ENCODE measurements at regions of chr17 and their contacts with region 1.

Region 1: DNA sequence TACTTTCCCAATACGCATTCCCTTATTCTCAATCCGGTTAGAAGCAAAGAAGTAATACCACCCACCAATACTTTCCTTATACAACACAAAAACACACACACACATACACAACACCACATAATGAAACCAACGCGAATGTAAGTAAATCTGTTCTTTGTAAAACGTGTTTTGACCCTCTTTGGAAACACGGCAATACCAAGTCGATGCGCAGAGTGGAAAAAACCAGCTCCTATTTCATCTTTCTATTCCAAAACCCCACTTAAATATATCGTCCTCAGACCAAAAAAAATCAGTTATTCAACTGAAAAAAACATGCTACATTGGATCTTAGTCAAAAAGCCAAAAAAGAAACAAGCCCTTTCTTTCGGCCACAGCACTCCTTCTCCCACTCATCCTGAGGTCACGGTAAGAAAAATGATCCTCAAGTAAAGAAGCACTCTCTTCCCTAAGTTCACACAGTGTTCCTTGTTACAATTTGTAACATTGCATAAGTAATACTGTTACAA is 31.0 kb upstream of the ARL4D start:
- DNase-seq: peak in 3 of 35 experiments; percentile 6 to 78 (median 36)
- ATAC-seq: peak; percentile 35 to 53 (median 44)
- H3K4me3 ChIP-seq: peak overlapping the region; percentile 84 to 86
- H3K4me3 Mint-ChIP-seq: peak overlapping the region; percentile 78 to 97 (median 90)
- H3K27ac ChIP-seq: peak overlapping the region; percentile 96
- H3K27ac Mint-ChIP-seq: peak overlapping the region; percentile 100
- H3K4me1 ChIP-seq: peaks cover 12 to 33% of the 10 kb centered on the region in 2 experiments
- H3K4me1 Mint-ChIP-seq: peaks cover 38 to 58% (median 52%) of the 10 kb centered on the region in 3 donors
- H3K27me3 ChIP-seq: no peaks in the 10 kb centered on the region
- H3K27me3 Mint-ChIP-seq: no peaks in the 10 kb centered on the region

Region 2: DNA sequence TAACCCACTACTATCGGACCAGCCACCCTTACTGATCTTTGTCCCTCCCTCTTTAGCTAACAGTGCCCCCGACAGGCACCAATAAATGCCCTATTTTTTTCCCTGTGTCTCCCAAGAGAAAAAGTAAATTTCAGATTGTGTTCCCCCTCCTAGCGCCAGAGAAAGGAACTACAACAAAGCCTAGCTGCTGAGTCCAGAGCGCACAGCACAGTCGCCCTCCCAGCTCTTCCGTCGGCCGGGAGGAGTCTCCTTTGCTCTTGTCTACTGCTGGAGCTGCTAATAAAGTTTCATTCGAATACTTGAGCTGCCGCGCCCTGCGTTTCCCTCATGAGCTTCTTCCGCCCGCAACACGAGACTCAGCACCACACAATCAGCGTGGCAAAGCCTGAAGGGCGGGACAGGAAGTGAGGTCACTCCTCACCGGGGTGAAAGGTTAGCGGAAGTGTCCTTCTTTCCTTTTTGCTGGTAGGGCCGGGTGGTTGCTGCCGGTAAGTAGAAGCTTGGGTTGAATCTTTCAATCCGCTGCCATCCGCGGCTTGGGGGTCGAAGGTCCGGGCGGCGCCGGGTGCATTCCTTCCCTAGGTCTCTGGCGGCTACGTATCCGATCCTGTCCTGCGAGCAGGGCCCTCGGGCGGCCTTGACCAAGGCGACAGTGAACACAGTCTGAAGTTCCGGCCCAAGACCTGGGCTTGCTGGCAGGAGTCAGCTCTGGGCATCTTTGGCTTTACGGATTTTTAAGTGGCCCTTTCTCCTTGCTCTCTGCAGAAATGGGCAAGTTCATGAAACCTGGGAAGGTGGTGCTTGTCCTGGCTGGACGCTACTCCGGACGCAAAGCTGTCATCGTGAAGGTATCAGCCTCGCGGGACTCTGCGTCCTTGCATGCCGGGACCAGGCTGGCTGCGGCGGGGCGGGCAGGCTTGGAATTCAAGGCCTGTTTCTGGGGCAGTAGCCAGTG is 369.5 kb before region 1 on chr17 and contains the start of gene RPL27:
- CTCF ChIA-PET with region 1: no interaction called
- POLR2A ChIA-PET with region 1: interaction called in 1 of 2 experiments, 14 read pairs
- DNase-seq: peak; percentile 94 to 100 (median 98)
- ATAC-seq: peak; percentile 94 to 97 (median 95)
- H3K4me3 ChIP-seq: peak within 1 kb of the TSS; percentile 72 to 80
- H3K4me3 Mint-ChIP-seq: peak within 1 kb of the TSS; percentile 90 to 97 (median 92)
- H3K27ac ChIP-seq: peak within 1 kb of the TSS; percentile 94
- H3K27ac Mint-ChIP-seq: peak within 1 kb of the TSS; percentile 88 to 98
- H3K4me1 ChIP-seq: peaks cover 3 to 27% of the 10 kb centered on the region in 2 experiments
- H3K4me1 Mint-ChIP-seq: peaks cover 24 to 30% (median 26%) of the 10 kb centered on the region in 3 donors
- H3K27me3 ChIP-seq: no peaks in the 10 kb centered on the region
- H3K27me3 Mint-ChIP-seq: no peaks in the 10 kb centered on the region
- total RNA-seq, gene RPL27: 1,254 to 1,790 (median 1,710) TPM

Region 3: GRCh38 chr17:43224146-43224695 is 143.6 kb before region 1 on chr17:
- CTCF ChIA-PET with region 1: no interaction called
- POLR2A ChIA-PET with region 1: no interaction called
- DNase-seq: peak in 1 of 35 experiments; percentile 0
- ATAC-seq: no peak
- H3K4me3 ChIP-seq: no peak overlapping the region
- H3K4me3 Mint-ChIP-seq: no peak overlapping the region
- H3K27ac ChIP-seq: no peak overlapping the region
- H3K27ac Mint-ChIP-seq: no peak overlapping the region
- H3K4me1 ChIP-seq: peaks cover 0 to 4% of the 10 kb centered on the region in 2 experiments
- H3K4me1 Mint-ChIP-seq: peaks cover 0 to 3% (median 0%) of the 10 kb centered on the region in 3 donors
- H3K27me3 ChIP-seq: no peaks in the 10 kb centered on the region
- H3K27me3 Mint-ChIP-seq: no peaks in the 10 kb centered on the region

Region 4: DNA sequence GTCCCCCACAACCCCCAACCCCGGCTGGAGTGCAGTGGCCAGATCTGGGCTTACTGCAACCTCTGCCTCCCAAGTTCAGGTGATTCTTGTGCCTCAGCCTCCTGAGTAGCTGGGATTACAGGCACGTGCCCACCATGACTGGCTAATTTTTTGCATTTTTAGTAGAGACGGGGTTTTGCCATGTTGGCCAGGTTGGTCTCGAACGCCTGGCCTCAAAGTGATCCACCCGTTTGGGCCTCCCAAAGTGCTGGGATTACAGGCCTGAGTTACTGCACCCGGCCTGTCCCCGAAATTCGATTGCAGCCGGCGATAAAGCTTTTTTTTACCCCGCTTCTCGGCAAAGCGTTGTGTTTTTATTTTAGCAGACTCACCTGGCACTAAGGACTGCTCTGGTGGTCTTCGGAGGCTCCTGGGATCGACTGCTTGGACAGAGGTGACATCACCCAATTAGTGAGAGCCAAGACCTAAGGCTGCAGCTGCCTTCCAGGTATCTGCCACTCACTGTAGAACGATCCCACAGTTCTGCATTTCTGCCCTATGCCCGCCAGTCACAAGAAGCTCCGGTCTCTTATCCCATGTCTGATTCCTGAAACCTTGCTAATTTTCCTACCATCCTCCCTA is 51.2 kb before region 1 on chr17:
- CTCF ChIA-PET with region 1: interaction called in 1 of 2 experiments, 4 read pairs
- POLR2A ChIA-PET with region 1: interaction called, 6 to 28 read pairs
- DNase-seq: peak in 4 of 35 experiments; percentile 6 to 34 (median 18)
- ATAC-seq: no peak
- H3K4me3 ChIP-seq: no peak overlapping the region
- H3K4me3 Mint-ChIP-seq: no peak overlapping the region
- H3K27ac ChIP-seq: no peak overlapping the region
- H3K27ac Mint-ChIP-seq: peak overlapping the region in 1 of 2 donors; percentile 64
- H3K4me1 ChIP-seq: peaks cover 0 to 2% of the 10 kb centered on the region in 2 experiments
- H3K4me1 Mint-ChIP-seq: peaks cover 6 to 14% (median 10%) of the 10 kb centered on the region in 3 donors
- H3K27me3 ChIP-seq: no peaks in the 10 kb centered on the region
- H3K27me3 Mint-ChIP-seq: no peaks in the 10 kb centered on the region

Region 5: DNA sequence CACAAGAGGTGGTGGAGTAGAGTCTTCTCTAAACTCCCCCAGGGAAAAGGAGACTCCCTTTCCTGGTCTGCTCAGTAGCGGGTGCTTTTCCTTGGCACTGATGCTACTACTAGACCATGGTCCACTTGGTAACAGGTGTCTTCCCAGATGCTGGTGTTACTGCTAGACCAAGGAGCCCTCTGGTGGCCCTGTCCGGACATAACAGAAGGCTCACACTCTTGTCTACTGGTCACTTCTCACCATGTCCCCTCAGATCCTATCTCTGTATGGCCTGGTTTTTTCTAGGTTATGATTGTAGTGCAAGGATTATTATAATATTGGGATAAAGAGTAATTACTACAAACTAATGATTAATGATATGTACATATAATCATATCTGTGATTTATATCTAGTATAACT is 18.6 kb before region 1 on chr17:
- CTCF ChIA-PET with region 1: no interaction called
- POLR2A ChIA-PET with region 1: no interaction called
- DNase-seq: no peak
- ATAC-seq: no peak
- H3K4me3 ChIP-seq: peak overlapping the region in 1 of 2 donors; percentile 10
- H3K4me3 Mint-ChIP-seq: no peak overlapping the region
- H3K27ac ChIP-seq: no peak overlapping the region
- H3K27ac Mint-ChIP-seq: no peak overlapping the region
- H3K4me1 ChIP-seq: no peaks in the 10 kb centered on the region
- H3K4me1 Mint-ChIP-seq: peaks cover 0 to 8% (median 5%) of the 10 kb centered on the region in 3 donors
- H3K27me3 ChIP-seq: no peaks in the 10 kb centered on the region
- H3K27me3 Mint-ChIP-seq: no peaks in the 10 kb centered on the region

Region 6: GRCh38 chr17:43388359-43389045 is 20.7 kb after region 1 on chr17:
- CTCF ChIA-PET with region 1: interaction called in 1 of 2 experiments, 14 read pairs
- POLR2A ChIA-PET with region 1: interaction called, 9 to 80 read pairs
- DNase-seq: peak; percentile 85 to 94 (median 89)
- ATAC-seq: peak; percentile 73 to 80 (median 78)
- H3K4me3 ChIP-seq: peak overlapping the region; percentile 89 to 92
- H3K4me3 Mint-ChIP-seq: peak overlapping the region; percentile 90 to 94 (median 93)
- H3K27ac ChIP-seq: peak overlapping the region; percentile 99
- H3K27ac Mint-ChIP-seq: peak overlapping the region; percentile 96 to 97
- H3K4me1 ChIP-seq: peaks cover 6 to 26% of the 10 kb centered on the region in 2 experiments
- H3K4me1 Mint-ChIP-seq: peaks cover 20 to 35% (median 28%) of the 10 kb centered on the region in 3 donors
- H3K27me3 ChIP-seq: no peaks in the 10 kb centered on the region
- H3K27me3 Mint-ChIP-seq: no peaks in the 10 kb centered on the region

Region 7: GRCh38 chr17:43393944-43394482 is 26.2 kb after region 1 on chr17:
- CTCF ChIA-PET with region 1: interaction called in 1 of 2 experiments, 11 read pairs
- POLR2A ChIA-PET with region 1: interaction called, 3 to 12 read pairs
- DNase-seq: peak; percentile 66 to 93 (median 84)
- ATAC-seq: peak; percentile 31 to 51 (median 38)
- H3K4me3 ChIP-seq: no peak overlapping the region
- H3K4me3 Mint-ChIP-seq: no peak overlapping the region
- H3K27ac ChIP-seq: no peak overlapping the region
- H3K27ac Mint-ChIP-seq: peak overlapping the region; percentile 34 to 46
- H3K4me1 ChIP-seq: peaks cover 11 to 35% of the 10 kb centered on the region in 2 experiments
- H3K4me1 Mint-ChIP-seq: peaks cover 25 to 46% (median 30%) of the 10 kb centered on the region in 3 donors
- H3K27me3 ChIP-seq: no peaks in the 10 kb centered on the region
- H3K27me3 Mint-ChIP-seq: no peaks in the 10 kb centered on the region